Activated B cell treated with CpG ODN at 0.5 μM for 24 hours (primary cell): ENCODE measurements at regions of chr7 and their contacts with region 1.

Region 1: DNA sequence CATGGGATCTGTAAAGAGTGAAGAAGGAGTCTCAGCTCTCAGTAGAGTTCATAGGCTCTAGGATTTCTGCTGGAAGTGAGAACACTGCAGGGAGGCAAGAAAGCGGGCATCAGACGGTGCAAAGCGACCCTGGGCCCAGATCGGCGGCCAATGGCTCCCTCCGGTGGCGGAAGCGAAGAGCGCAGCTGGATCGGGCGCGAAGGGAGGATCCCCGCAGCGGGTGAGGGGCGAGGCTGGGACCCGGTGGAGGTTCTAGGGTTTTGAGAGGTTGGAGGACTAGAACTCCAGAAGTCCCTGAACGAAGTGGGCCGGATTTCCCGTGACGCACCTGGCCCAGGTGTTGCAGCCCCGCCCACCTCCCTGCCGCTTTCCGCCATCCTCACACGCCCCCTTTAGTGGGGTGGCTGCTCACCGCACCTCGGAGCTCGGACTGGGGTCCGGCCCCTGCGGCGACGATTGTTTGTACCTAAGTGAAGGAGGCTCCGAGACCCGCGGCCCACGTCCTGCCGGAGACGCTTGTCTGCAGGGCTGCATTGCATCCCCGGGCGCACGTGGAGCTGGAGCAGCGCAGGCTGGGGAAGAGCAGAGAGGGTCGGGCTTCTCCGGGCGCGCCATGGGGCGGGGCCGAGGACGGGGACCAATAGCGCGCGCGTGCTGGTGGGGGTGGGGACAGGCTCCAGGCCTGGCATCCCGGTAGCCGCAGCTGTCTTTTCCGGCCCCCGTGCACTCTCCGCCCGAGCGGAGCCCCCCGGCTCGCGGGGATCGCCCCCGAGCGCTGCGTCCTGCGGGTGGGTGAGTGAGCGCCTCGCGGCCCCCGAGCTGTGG is at the start of gene SLC12A9:
- DNase-seq: peak; percentile 83
- ATAC-seq: peak; percentile 93
- H3K4me3 Mint-ChIP-seq: peak within 1 kb of the TSS; percentile 89
- H3K27ac Mint-ChIP-seq: peak within 1 kb of the TSS; percentile 75
- H3K4me1 Mint-ChIP-seq: peaks cover 21% of the 10 kb centered on the region
- H3K27me3 Mint-ChIP-seq: no peaks in the 10 kb centered on the region
- CTCF ChIP-seq: peak; percentile 79
- total RNA-seq, gene SLC12A9: 48.0 and 48.9 TPM in 2 replicates

Region 2: GRCh38 chr7:100563809-100564400 is 288.4 kb before region 1 on chr7:
- CTCF ChIA-PET with region 1: interaction called, 9 read pairs
- POLR2A ChIA-PET with region 1: no interaction called
- intact Hi-C with region 1: loop called (anchors 1 kb)
- DNase-seq: peak; percentile 79
- ATAC-seq: peak; percentile 78
- H3K4me3 Mint-ChIP-seq: no peak overlapping the region
- H3K27ac Mint-ChIP-seq: no peak overlapping the region
- H3K4me1 Mint-ChIP-seq: peaks cover 25% of the 10 kb centered on the region
- H3K27me3 Mint-ChIP-seq: no peaks in the 10 kb centered on the region
- CTCF ChIP-seq: peak; percentile 90

Region 3: DNA sequence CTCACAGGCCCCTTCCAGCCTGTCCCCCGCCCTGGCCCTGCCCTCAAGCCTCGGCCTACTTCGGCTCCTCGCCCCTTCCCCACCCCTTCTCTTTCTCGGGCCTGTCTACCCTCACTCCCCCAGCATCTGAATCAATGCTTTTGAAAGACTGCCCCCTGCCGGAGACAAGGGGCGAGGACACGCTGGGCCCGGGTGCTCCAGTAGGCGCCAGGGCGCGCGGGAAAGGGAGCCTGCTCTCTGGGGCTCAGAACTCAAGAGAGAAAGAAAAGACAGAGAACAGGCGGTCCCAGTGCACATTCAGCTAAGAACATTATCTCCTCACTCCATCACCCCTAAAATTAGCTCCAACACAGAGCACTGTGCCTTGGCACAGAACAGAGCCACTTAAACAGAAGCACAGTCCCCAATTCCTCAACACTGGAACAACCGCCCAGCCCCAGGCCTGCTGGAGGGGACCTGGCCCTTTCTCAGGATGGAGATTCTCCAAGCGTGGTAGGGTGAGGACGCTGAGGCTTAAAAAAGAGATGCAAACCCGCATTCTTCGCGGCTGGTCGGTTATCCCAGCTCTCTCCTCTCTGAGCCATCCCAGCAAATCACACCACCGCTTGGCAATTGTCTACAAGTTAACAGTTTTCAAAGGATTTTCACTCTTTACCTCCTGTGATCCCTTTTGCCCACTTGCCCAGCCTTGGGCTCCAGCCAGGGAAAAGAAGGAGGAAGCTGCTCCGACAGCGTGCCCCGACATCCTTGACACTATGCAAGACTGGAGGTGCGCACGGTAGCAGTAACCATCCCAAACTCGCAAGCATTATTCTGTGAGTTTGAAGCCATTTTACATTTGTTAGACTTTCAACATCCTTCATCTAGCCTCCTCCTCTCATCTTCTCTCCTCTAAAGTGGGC is 160.3 kb before region 1 on chr7:
- CTCF ChIA-PET with region 1: interaction called, 7 read pairs
- POLR2A ChIA-PET with region 1: interaction called, 11 read pairs
- intact Hi-C with region 1: loop called (anchors 1 kb)
- DNase-seq: peak; percentile 67
- ATAC-seq: peak; percentile 63
- H3K4me3 Mint-ChIP-seq: peak overlapping the region; percentile 90
- H3K27ac Mint-ChIP-seq: peak overlapping the region; percentile 80
- H3K4me1 Mint-ChIP-seq: peaks cover 49% of the 10 kb centered on the region
- H3K27me3 Mint-ChIP-seq: no peaks in the 10 kb centered on the region
- CTCF ChIP-seq: peak; percentile 21

Region 4: DNA sequence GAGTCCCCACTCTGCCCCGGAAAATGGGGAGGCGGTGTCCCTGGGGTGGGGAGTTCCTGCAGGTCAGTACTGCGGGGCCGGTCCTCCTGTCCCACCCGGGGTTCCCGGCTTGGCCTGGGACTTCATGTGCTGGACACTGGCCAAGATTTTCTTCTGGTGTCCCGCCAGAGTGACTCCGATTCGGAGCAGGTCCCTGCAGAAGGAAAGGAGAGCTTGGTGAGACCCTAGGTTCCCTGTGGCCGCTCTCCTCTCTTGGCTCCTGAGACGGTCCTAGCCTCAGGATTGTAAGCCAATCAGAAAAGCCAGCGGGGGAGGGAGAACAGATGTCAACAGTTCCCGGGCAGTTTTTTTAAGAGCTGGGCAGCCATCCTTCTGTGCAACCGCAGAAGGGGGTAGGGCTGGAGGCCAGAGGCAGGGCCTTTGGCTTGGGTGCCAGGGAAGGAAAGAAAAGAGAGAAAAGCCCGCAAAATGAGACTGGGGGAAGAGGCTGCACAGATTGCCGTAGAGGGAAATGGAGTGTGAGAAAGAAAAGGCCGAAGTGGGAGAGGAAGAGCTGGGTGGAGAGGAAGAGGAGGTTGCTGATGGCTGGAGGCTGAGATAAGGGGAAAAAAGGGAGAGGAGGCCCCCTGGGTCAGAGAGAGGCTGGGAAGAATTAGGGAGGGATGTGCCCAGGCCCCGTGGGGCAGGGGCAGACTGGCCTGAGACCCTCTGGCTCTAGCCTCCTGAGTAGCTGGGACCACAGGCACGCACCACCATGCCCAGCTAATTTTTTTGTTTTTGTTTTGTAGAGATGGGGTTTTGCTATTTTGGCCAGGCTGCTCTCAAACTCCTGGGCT is 48.6 kb before region 1 on chr7:
- CTCF ChIA-PET with region 1: interaction called, 57 read pairs
- POLR2A ChIA-PET with region 1: interaction called, 17 read pairs
- intact Hi-C with region 1: loop called (anchors 1 kb)
- DNase-seq: peak; percentile 62
- ATAC-seq: peak; percentile 97
- H3K4me3 Mint-ChIP-seq: peak overlapping the region; percentile 76
- H3K27ac Mint-ChIP-seq: peak overlapping the region; percentile 84
- H3K4me1 Mint-ChIP-seq: peaks cover 36% of the 10 kb centered on the region
- H3K27me3 Mint-ChIP-seq: no peaks in the 10 kb centered on the region
- CTCF ChIP-seq: no peak

Region 5: GRCh38 chr7:100837099-100837836 is 15.0 kb before region 1 on chr7:
- CTCF ChIA-PET with region 1: interaction called, 10 read pairs
- POLR2A ChIA-PET with region 1: interaction called, 7 read pairs
- intact Hi-C with region 1: loop called (anchors 1 kb)
- DNase-seq: peak; percentile 67
- ATAC-seq: peak; percentile 97
- H3K4me3 Mint-ChIP-seq: peak overlapping the region; percentile 89
- H3K27ac Mint-ChIP-seq: peak overlapping the region; percentile 85
- H3K4me1 Mint-ChIP-seq: peaks cover 17% of the 10 kb centered on the region
- H3K27me3 Mint-ChIP-seq: no peaks in the 10 kb centered on the region
- CTCF ChIP-seq: no peak

Region 6: DNA sequence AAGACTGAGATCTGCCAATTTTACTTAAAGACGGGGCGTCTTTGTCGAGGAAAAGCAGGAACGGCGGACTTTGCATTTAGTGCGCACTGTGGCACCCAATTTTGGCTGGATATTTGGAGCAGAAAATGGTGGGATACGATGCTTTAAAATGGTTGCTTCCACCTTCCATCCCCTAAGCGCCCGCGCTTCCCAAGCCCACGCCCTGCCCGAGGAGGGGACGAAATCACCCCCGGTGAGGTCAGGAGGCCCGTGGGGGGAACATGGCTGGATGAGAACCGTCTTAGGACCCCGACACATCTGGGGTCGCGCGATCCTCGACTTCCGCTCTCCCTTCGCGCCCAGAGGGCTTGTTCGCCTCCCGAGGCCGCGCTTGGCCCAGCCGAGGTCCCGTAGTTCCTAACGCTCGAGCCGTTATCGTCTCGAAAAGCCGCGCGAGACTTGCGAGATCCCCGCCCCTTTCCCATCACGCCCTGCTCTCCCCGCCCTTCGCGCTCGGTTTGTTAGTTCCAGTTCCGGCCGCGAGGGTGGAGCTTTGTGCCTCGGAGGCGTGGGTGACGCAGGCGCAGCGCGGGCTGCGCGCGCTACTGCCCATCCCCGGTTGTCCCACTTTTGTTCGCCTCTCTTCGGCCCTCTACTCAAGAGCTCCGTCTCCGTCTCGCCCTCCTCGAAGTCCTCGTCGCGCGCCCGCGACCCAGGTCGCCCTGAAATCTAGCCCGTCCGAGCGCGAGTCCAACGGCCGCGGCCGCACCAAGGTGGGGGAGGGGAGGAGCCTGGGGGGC is 22.5 kb after region 1 on chr7 and contains the start of gene SRRT:
- CTCF ChIA-PET with region 1: interaction called, 6 read pairs
- POLR2A ChIA-PET with region 1: interaction called, 26 read pairs
- intact Hi-C with region 1: loop called (anchors 1 kb)
- DNase-seq: peak; percentile 96
- ATAC-seq: peak; percentile 96
- H3K4me3 Mint-ChIP-seq: peak within 1 kb of the TSS; percentile 99
- H3K27ac Mint-ChIP-seq: peak within 1 kb of the TSS; percentile 98
- H3K4me1 Mint-ChIP-seq: peaks cover 45% of the 10 kb centered on the region
- H3K27me3 Mint-ChIP-seq: no peaks in the 10 kb centered on the region
- CTCF ChIP-seq: no peak
- total RNA-seq, gene SRRT: 229 and 244 TPM in 2 replicates

Region 7: DNA sequence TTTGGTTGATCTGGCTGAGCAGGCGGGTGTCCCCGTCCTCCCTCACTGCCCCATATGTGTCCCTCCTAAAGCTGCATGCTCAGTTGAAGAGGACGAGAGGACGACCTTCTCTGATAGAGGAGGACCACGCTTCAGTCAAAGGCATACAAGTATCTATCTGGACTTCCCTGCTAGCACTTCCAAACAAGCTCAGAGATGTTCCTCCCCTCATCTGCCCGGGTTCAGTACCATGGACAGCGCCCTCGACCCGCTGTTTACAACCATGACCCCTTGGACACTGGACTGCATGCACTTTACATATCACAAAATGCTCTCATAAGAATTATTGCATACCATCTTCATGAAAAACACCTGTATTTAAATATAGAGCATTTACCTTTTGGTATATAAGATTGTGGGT is 206.1 kb after region 1 on chr7:
- CTCF ChIA-PET with region 1: interaction called, 3 read pairs
- POLR2A ChIA-PET with region 1: no interaction called
- intact Hi-C with region 1: loop called (anchors 1 kb)
- DNase-seq: peak; percentile 43
- ATAC-seq: no peak
- H3K4me3 Mint-ChIP-seq: no peak overlapping the region
- H3K27ac Mint-ChIP-seq: no peak overlapping the region
- H3K4me1 Mint-ChIP-seq: no peaks in the 10 kb centered on the region
- H3K27me3 Mint-ChIP-seq: peaks cover 32% of the 10 kb centered on the region
- CTCF ChIP-seq: no peak